MCF 10A (cell line): ENCODE measurements at regions of chr17 and their contacts with region 1.

Region 1: DNA sequence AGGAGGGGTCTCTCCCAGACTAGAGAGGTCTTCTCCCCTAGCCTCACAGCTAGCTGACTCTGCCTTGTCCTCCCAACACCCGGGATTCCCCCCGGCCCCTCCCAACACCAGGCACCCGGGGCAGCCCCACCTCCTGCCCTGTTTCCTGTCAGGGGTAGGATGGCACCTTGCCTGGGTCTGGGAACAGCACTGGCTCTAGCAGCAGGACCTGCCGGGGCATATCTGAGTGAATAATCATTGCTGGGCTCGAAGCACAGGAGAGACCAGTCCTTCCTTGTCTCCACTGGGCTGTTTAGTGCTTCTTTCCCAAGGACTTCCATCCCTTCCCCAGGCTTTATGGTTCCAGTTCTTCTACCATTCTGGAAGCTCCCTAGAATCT is 25.7 kb downstream of the MINK1 start:
- DNase-seq: peak; percentile 91
- H3K4me3 Mint-ChIP-seq: peak overlapping the region; percentile 83
- H3K27ac Mint-ChIP-seq: peak overlapping the region; percentile 89
- H3K4me1 Mint-ChIP-seq: peaks cover 55% of the 10 kb centered on the region
- H3K27me3 Mint-ChIP-seq: no peaks in the 10 kb centered on the region
- CTCF ChIP-seq: no peak

Region 2: DNA sequence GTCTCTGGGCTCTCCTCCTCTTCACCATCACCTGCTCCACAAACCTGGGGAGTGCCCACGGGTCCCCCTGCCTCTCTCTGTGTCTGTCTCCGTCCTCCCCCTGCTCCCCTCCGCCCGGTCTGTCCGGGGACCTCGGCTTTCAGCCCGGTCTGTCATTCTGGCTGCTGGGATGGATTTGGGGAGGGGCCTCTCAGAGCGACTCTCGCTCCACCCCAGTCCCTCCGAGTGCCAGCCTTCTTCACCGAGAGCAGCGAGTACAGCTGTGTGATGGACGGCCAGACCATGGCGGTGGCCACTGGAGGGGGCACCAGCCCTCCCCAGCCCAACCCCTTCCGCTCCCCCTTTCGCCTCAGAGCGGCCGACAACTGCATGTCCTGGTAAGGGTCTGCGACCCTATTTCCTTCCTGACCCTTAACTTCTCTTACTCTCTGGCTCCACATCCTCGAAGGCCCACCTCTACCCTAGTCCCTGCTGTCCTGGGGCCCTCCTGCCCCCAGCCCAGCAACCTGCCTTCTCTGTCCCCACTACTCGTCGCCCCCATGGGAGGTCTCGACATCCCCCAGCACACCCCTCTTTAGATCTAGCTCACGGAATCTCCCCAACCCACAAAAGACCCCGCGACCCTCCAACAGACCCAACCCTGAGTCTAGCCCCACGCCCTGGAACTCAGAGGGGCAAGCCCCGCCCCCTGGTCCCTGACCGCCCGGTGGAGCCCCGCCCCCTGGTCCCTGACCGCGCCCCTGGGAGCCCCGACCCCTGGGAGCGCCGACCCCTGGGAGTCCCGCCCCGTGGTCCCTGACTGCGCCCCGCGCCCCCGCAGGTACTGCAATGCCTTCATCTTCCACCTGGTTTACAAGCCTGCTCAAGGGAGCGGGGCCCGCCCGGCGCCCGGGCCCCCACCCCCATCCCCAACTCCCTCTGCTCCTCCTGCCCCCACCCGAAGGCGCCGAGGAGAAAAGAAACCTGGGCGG is 113.6 kb before region 1 on chr17:
- CTCF ChIA-PET with region 1: no interaction called
- POLR2A ChIA-PET with region 1: no interaction called
- intact Hi-C with region 1: no loop called
- DNase-seq: no peak
- H3K4me3 Mint-ChIP-seq: no peak overlapping the region
- H3K27ac Mint-ChIP-seq: no peak overlapping the region
- H3K4me1 Mint-ChIP-seq: peaks cover 3% of the 10 kb centered on the region
- H3K27me3 Mint-ChIP-seq: peaks cover 26% of the 10 kb centered on the region
- CTCF ChIP-seq: no peak

Region 3: GRCh38 chr17:4846635-4847390 is 12.1 kb before region 1 on chr17:
- CTCF ChIA-PET with region 1: interaction called, 4 read pairs
- POLR2A ChIA-PET with region 1: interaction called, 94 read pairs
- intact Hi-C with region 1: no loop called
- DNase-seq: no peak
- H3K4me3 Mint-ChIP-seq: peak overlapping the region; percentile 9
- H3K27ac Mint-ChIP-seq: peak overlapping the region; percentile 89
- H3K4me1 Mint-ChIP-seq: peaks cover 62% of the 10 kb centered on the region
- H3K27me3 Mint-ChIP-seq: no peaks in the 10 kb centered on the region
- CTCF ChIP-seq: no peak

Region 4: GRCh38 chr17:4895657-4896331 is 36.9 kb after region 1 on chr17:
- CTCF ChIA-PET with region 1: no interaction called
- POLR2A ChIA-PET with region 1: no interaction called
- intact Hi-C with region 1: no loop called
- DNase-seq: no peak
- H3K4me3 Mint-ChIP-seq: no peak overlapping the region
- H3K27ac Mint-ChIP-seq: no peak overlapping the region
- H3K4me1 Mint-ChIP-seq: no peaks in the 10 kb centered on the region
- H3K27me3 Mint-ChIP-seq: no peaks in the 10 kb centered on the region
- CTCF ChIP-seq: no peak